Activated CD8-positive, alpha-beta memory T cell treated with anti-CD3 and anti-CD28 coated beads, Interleukin-2, amount 10 ng/mL, durations not matched to agents 7 days and 5 days (primary cell): ENCODE measurements at regions of chr12 and their contacts with region 1.

Region 1: GRCh38 chr12:48618541-48618940 is 48.7 kb upstream of the LALBA start:
- DNase-seq: peak; percentile 81
- ATAC-seq: peak; percentile 84
- H3K4me3 Mint-ChIP-seq: no peak overlapping the region
- H3K27ac Mint-ChIP-seq: no peak overlapping the region
- H3K4me1 Mint-ChIP-seq: no peaks in the 10 kb centered on the region
- H3K27me3 Mint-ChIP-seq: peaks cover 39% of the 10 kb centered on the region

Region 2: DNA sequence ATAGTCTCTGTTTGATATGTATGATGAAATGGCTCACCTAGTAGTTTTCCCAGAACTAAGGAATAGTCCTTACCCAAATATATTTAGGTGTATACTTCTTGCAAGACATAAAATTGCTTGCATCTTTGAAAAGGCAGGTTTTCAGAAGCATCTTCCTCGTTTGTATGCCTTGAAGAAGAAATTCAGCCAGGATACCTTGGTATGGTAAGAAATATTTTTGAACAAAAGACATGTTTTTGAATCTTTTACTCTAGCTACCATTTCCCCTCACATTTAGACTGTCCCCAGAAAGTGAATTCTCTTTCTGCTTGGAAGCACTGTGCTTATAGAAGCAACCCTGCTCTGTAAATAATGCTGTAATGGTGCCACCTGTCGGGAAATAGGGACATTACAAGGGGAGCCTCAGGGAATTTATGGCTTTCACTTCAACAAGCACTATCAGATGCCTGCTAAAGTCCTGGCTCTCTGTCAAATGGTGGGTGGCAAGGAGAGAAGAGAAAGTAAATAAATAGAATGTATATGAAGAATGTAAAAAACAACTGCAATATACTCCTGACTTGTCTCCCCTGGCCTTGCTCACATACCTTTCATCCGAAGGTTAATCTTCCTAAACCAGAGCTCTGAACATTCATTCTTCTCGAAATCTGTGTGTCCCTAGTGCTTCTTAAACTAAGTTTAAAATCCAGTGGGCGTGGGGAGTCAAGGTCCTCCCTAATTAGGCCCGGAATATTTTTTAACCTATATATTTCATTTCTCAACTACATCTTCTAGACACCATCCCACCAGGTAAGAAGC is 429.0 kb before region 1 on chr12:
- CTCF ChIA-PET with region 1: interaction called, 10 read pairs
- DNase-seq: peak; percentile 81
- ATAC-seq: peak; percentile 75
- H3K4me3 Mint-ChIP-seq: no peak overlapping the region
- H3K27ac Mint-ChIP-seq: no peak overlapping the region
- H3K4me1 Mint-ChIP-seq: peaks cover 16% of the 10 kb centered on the region
- H3K27me3 Mint-ChIP-seq: peaks cover 56% of the 10 kb centered on the region

Region 3: DNA sequence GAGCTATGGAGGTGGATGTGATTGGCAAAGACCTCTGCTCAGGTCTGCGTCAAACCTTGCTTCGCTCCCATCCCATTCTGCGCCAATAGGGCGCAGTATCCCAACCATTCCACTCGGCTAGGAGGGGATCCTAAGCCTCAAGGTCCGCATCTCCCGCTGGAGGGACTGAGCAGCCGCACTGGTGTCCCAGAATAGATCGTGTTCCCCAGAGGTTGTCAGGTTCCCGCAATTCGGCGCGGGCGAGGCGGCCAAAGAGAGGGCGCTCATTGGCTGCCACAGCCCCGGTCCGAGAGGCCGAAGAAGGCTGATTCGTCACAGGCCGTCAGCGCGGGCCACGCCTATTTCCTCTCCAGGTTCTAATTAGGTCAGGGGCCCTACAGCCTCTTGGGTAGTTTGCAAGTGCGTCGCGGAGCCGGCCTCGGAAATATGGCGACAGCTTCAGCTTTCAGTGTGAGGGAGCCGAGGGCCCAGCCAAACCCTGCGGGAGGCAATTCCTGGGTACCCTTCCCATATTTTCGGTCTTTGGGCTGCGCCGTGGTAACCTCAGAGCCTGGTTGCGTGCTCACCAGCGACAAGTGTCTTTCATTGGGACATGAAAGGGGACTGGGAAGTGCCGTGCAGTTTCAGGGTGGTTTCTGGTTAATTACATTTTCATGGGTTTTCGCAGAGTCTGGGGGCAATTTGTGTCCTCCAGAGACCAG is 420.4 kb before region 1 on chr12:
- CTCF ChIA-PET with region 1: interaction called, 17 read pairs
- DNase-seq: peak; percentile 97
- ATAC-seq: peak; percentile 99
- H3K4me3 Mint-ChIP-seq: peak overlapping the region; percentile 84
- H3K27ac Mint-ChIP-seq: peak overlapping the region; percentile 96
- H3K4me1 Mint-ChIP-seq: peaks cover 35% of the 10 kb centered on the region
- H3K27me3 Mint-ChIP-seq: peaks cover 22% of the 10 kb centered on the region

Region 4: DNA sequence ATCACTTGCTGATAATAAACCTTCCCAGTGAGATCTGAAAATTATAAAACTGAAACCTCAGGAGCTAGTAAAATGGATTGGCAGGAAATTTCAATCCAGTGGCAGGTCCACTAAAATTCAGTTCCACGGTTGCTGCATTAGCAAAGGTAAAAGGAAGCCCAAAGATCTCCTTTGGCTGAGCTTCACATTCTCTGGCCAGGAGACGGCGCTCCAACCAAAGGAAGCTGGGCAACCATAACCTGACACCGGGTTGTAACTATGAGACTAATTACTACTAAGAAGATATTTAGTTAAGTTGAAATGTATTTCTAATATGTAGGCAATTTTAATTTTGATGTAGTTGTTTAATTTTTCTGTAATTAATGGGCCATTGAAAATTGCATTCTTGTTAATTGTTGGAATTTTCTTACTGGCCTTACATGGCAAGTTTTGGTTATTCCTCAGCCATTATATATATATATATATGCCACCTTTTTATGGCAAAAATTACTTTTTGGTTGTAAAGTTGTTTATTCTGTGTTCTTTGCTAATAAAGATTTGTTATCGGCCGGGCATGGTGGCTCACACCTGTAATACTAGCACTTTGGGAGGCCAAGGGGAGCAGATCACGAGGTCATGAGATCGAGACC is 76.1 kb before region 1 on chr12:
- CTCF ChIA-PET with region 1: interaction called, 81 read pairs
- DNase-seq: peak; percentile 60
- ATAC-seq: no peak
- H3K4me3 Mint-ChIP-seq: no peak overlapping the region
- H3K27ac Mint-ChIP-seq: no peak overlapping the region
- H3K4me1 Mint-ChIP-seq: peaks cover 5% of the 10 kb centered on the region
- H3K27me3 Mint-ChIP-seq: peaks cover 12% of the 10 kb centered on the region

Region 5: GRCh38 chr12:48631057-48631456 is 12.5 kb after region 1 on chr12:
- CTCF ChIA-PET with region 1: interaction called, 10 read pairs
- DNase-seq: no peak
- ATAC-seq: no peak
- H3K4me3 Mint-ChIP-seq: no peak overlapping the region
- H3K27ac Mint-ChIP-seq: no peak overlapping the region
- H3K4me1 Mint-ChIP-seq: no peaks in the 10 kb centered on the region
- H3K27me3 Mint-ChIP-seq: peaks cover 16% of the 10 kb centered on the region